ENCODE measurements at regions of chrX and their contacts with region 1.

Region 1: DNA sequence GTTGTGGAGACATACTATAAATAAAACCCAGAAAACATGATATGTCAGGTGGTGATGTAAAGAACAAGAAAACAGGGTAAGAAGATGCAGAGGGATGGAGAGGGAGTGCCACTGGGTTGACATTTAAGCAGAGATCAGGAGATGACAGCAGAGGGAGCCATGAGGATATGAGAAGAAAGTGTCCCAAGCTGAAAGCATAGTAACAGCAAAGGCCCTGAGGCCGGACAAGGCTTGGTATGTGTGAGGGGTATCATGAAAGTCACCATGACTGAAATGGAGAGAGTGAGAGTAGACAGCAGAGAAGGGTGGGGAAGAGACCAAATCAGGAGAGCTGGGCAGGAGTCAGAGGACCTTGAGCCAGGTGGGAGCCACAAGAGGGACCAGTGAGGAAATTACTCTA is 3.4 kb downstream of the GPKOW start:
- DNase-seq: no peak
- ATAC-seq: no peak
- H3K4me3 Mint-ChIP-seq: no peak overlapping the region
- H3K27ac Mint-ChIP-seq: peak overlapping the region; percentile 56
- H3K4me1 Mint-ChIP-seq: peaks cover 20% of the 10 kb centered on the region
- H3K27me3 Mint-ChIP-seq: no peaks in the 10 kb centered on the region

Region 2: GRCh38 chrX:49002091-49002935 is 117.8 kb before region 1 on chrX and contains the start of gene GRIPAP1:
- CTCF ChIA-PET with region 1: no interaction called
- POLR2A ChIA-PET with region 1: no interaction called
- intact Hi-C with region 1: no loop called
- DNase-seq: peak; percentile 87
- ATAC-seq: peak; percentile 82
- H3K4me3 Mint-ChIP-seq: peak within 1 kb of the TSS; percentile 97
- H3K27ac Mint-ChIP-seq: peak within 1 kb of the TSS; percentile 98
- H3K4me1 Mint-ChIP-seq: peaks cover 34% of the 10 kb centered on the region
- H3K27me3 Mint-ChIP-seq: no peaks in the 10 kb centered on the region
- total RNA-seq, gene GRIPAP1: 57.8 to 63.3 TPM

Region 3: DNA sequence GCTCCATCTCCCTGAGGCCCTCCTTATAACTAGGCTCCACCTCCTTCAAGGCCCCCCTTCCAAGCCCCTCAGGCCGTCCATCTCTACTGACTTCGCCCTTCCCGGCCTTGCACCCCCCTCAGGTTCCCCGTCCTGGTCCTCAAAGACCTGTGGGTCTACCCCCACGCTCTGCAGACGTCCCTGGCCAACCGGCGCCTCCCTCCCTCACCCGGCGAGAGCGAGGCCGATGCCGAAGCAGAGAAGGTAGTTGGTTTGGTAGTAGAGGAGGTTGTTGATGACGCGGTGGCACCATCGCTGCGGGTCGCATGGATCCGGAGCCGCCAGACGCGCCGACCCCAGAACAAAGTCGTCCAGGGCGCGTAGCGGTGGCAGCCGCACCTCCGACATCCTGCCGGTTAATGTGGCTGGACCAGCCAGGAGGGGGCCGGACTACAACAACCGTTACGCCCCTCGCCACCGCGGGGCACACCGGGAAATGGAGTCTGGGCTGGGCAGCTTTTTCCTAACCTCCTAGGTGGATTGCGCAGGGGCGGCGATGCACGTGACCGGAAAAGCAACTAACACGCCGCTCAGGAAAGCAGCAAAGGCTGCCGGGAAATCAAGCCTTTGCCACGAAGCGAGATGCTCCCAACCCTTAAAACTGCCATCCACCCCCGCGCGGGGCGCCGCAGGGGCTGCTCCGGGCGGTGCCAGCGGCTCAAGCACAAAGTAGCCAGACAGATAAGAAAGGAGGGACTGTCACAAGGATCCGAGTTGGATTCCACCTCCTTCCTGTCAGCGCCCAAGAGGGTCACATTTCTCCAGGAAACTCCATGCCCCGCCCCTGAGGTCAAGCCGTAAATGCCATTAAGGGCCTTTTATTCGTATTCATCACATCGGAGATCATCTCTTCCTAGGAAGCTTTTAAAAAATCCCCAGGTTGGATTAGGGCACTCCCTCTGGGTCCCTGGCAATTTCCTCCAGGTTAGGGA is 46.2 kb before region 1 on chrX and contains the start of gene PRAF2:
- CTCF ChIA-PET with region 1: no interaction called
- POLR2A ChIA-PET with region 1: no interaction called
- intact Hi-C with region 1: loop called (anchors 1 to 2 kb)
- DNase-seq: peak; percentile 94
- ATAC-seq: peak; percentile 98
- H3K4me3 Mint-ChIP-seq: peak within 1 kb of the TSS; percentile 78
- H3K27ac Mint-ChIP-seq: peak within 1 kb of the TSS; percentile 73
- H3K4me1 Mint-ChIP-seq: peaks cover 19% of the 10 kb centered on the region
- H3K27me3 Mint-ChIP-seq: no peaks in the 10 kb centered on the region
- total RNA-seq, gene PRAF2: 9.1 to 11.5 TPM

Region 4: GRCh38 chrX:49079489-49080428 is 40.3 kb before region 1 on chrX and contains the start of gene WDR45:
- CTCF ChIA-PET with region 1: no interaction called
- POLR2A ChIA-PET with region 1: no interaction called
- intact Hi-C with region 1: loop called (anchors 1 to 2 kb)
- DNase-seq: peak; percentile 84
- ATAC-seq: peak; percentile 84
- H3K4me3 Mint-ChIP-seq: peak within 1 kb of the TSS; percentile 93
- H3K27ac Mint-ChIP-seq: peak within 1 kb of the TSS; percentile 99
- H3K4me1 Mint-ChIP-seq: peaks cover 16% of the 10 kb centered on the region
- H3K27me3 Mint-ChIP-seq: no peaks in the 10 kb centered on the region
- total RNA-seq, gene WDR45: 22.4 to 23.9 TPM

Region 5: DNA sequence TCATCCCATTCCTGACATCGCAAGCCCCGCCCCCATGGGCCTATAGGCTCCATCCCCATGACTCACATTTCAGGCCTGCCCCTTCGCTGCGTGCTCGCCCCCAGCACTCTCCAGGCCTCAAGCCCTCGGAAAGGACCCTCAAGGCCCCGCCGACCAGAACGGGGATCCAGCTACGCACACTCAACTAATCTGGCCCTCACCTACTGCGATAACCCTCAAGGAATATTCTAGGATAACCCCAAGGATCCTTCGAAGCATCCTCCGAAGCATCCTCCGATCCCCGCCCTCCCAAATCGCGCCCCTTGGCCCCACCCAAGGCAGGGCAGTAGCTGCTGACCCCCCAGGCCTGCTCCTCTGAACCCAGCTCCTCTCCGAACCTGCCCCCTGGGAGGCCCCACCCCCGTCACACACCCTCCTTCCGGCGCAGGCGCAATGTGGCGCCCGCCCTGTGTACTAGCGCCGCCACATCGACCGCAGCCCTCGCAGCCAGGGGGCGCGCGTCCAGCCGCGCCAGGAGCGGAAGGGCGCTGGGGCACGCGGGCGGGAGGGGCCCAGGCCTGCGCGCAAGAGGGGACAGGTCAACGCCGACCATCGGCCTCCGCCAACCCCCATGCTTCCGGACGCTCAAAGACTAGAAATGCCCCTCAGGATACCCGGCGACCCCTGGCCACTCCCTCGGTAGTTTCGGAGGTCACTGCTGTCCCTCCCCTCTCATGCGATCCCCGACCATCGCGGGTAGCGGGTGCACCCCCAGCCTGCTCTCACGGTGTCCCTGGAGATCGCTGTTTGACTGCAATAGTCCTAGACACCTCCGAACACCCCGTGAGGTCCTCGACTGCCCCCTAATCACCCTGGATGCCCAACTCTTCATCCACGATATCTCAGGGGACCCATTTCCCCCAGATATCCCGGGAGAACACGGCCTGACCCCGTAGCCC is 36.1 kb after region 1 on chrX:
- CTCF ChIA-PET with region 1: interaction called, 3 read pairs
- POLR2A ChIA-PET with region 1: no interaction called
- intact Hi-C with region 1: loop called in 1 of 2 experiments (anchors 1 kb)
- DNase-seq: peak; percentile 90
- ATAC-seq: peak; percentile 88
- H3K4me3 Mint-ChIP-seq: peak overlapping the region; percentile 87
- H3K27ac Mint-ChIP-seq: peak overlapping the region; percentile 96
- H3K4me1 Mint-ChIP-seq: peaks cover 11% of the 10 kb centered on the region
- H3K27me3 Mint-ChIP-seq: no peaks in the 10 kb centered on the region

Region 6: DNA sequence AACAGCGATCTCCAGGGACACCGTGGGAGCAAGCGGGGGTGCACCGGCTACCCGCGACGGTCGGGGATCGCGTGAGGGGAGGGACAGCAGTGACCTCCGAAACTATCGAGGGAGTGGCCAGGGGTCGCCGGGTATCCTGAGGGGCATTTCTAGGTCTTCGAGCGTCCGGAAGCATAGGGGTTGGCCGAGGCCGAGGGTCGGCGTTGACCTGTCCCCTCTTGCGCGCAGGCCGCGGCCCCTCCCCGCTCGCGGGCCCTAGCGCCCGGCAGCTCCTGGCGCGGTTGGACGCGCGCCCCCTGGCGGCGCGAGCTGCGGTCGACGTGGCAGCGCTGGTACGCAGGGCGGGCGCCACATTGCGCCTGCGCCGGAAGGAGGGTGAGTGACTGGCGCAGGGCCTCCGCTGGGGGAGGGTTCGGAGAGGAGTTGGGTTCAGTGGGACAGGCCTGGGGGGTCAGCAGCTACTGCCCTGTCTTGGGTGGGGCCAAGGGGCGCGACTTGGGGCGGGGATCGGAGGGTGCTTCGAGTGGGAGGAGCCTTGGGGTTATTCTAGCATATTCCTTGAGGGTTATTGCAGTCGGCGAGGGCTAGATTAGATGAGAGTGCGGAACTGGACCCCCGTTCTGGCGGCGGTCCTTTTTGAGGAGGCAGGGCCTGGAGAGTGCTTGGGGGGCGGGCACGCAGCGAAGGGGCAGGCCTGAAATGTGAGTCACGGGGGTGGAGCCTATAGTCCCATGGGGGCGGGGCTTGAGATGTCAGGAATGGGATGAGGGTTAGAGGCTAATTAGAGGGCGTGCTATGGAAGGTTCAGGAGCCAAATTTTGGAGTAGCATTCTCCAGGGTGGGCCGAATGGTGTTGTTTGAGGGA is 43.7 kb after region 1 on chrX:
- CTCF ChIA-PET with region 1: interaction called, 3 read pairs
- POLR2A ChIA-PET with region 1: no interaction called
- intact Hi-C with region 1: loop called (anchors 1 to 5 kb)
- DNase-seq: peak; percentile 88
- ATAC-seq: peak; percentile 60
- H3K4me3 Mint-ChIP-seq: peak overlapping the region; percentile 77
- H3K27ac Mint-ChIP-seq: peak overlapping the region; percentile 96
- H3K4me1 Mint-ChIP-seq: peaks cover 27% of the 10 kb centered on the region
- H3K27me3 Mint-ChIP-seq: no peaks in the 10 kb centered on the region

Region 7: DNA sequence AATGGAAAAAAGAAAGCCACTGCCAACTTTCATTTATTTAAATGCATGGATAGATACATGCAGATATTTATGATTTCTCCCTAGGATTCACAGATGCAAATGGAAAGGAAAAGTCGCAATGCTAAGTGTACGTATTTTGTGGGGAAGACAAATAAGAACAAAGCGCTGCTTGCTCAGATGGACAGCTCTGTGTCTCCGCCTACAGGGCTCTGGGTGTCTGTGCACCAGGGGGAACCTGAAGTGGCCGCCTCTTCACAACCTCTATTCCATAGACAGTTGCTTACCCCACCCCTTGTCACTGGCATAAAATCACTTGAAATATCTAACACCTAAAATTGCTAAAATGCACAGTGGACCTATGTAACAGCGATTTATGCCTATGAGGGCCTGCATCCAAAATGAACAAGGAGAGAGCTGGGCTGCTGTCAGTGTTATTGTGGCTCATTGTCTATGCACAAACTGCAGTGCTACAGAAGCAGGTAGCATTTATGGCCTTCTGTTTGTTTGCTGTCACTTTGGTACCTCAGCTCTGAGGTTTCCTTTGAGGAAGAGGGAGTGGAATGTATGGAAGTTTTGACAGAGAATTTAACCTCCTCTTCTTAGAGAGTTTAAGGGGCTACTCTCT is 634.2 kb after region 1 on chrX:
- CTCF ChIA-PET with region 1: no interaction called
- POLR2A ChIA-PET with region 1: no interaction called
- intact Hi-C with region 1: loop called in 1 of 2 experiments (anchors 10 kb)
- DNase-seq: peak; percentile 61
- ATAC-seq: peak; percentile 72
- H3K4me3 Mint-ChIP-seq: no peak overlapping the region
- H3K27ac Mint-ChIP-seq: no peak overlapping the region
- H3K4me1 Mint-ChIP-seq: no peaks in the 10 kb centered on the region
- H3K27me3 Mint-ChIP-seq: peaks cover 3% of the 10 kb centered on the region

Region 8: GRCh38 chrX:50967736-50968135 is 1847.6 kb after region 1 on chrX:
- CTCF ChIA-PET with region 1: no interaction called
- POLR2A ChIA-PET with region 1: no interaction called
- intact Hi-C with region 1: no loop called
- DNase-seq: no peak
- ATAC-seq: no peak
- H3K4me3 Mint-ChIP-seq: no peak overlapping the region
- H3K27ac Mint-ChIP-seq: no peak overlapping the region
- H3K4me1 Mint-ChIP-seq: no peaks in the 10 kb centered on the region
- H3K27me3 Mint-ChIP-seq: no peaks in the 10 kb centered on the region

Measured in activated CD4-positive, alpha-beta T cell treated with anti-CD3 and anti-CD28 coated beads for 36 hours (primary cell).